T-cell (primary cell): ENCODE measurements at regions of chr5 and their contacts with region 1.

Region 1: GRCh38 chr5:140734354-140734753 is 34.1 kb downstream of the ZMAT2 start:
- DNase-seq: no peak
- ATAC-seq: no peak
- H3K4me3 ChIP-seq: no peak overlapping the region
- H3K4me3 Mint-ChIP-seq: no peak overlapping the region
- H3K27ac ChIP-seq: no peak overlapping the region
- H3K27ac Mint-ChIP-seq: no peak overlapping the region
- H3K4me1 ChIP-seq: no peaks in the 10 kb centered on the region
- H3K4me1 Mint-ChIP-seq: no peaks in the 10 kb centered on the region
- H3K27me3 ChIP-seq: peaks cover 0 to 6% of the 10 kb centered on the region in 2 experiments
- H3K27me3 Mint-ChIP-seq: peaks cover 34 to 40% of the 10 kb centered on the region in 2 donors

Region 2: GRCh38 chr5:140391312-140391711 is 343.0 kb before region 1 on chr5:
- CTCF ChIA-PET with region 1: no interaction called
- POLR2A ChIA-PET with region 1: interaction called in 1 of 2 experiments, 12 read pairs
- DNase-seq: no peak
- ATAC-seq: no peak
- H3K4me3 ChIP-seq: no peak overlapping the region
- H3K4me3 Mint-ChIP-seq: no peak overlapping the region
- H3K27ac ChIP-seq: no peak overlapping the region
- H3K27ac Mint-ChIP-seq: no peak overlapping the region
- H3K4me1 ChIP-seq: no peaks in the 10 kb centered on the region
- H3K4me1 Mint-ChIP-seq: no peaks in the 10 kb centered on the region
- H3K27me3 ChIP-seq: no peaks in the 10 kb centered on the region
- H3K27me3 Mint-ChIP-seq: no peaks in the 10 kb centered on the region

Region 3: GRCh38 chr5:140524003-140524402 is 210.4 kb before region 1 on chr5:
- CTCF ChIA-PET with region 1: no interaction called
- POLR2A ChIA-PET with region 1: interaction called in 1 of 2 experiments, 29 read pairs
- DNase-seq: no peak
- ATAC-seq: no peak
- H3K4me3 ChIP-seq: no peak overlapping the region
- H3K4me3 Mint-ChIP-seq: no peak overlapping the region
- H3K27ac ChIP-seq: no peak overlapping the region
- H3K27ac Mint-ChIP-seq: peak overlapping the region in 1 of 2 donors; percentile 47
- H3K4me1 ChIP-seq: no peaks in the 10 kb centered on the region
- H3K4me1 Mint-ChIP-seq: no peaks in the 10 kb centered on the region
- H3K27me3 ChIP-seq: no peaks in the 10 kb centered on the region
- H3K27me3 Mint-ChIP-seq: no peaks in the 10 kb centered on the region

Region 4: GRCh38 chr5:140710899-140711552 is 23.3 kb before region 1 on chr5:
- CTCF ChIA-PET with region 1: no interaction called
- POLR2A ChIA-PET with region 1: interaction called in 1 of 2 experiments, 14 read pairs
- DNase-seq: peak; percentile 63 to 93 (median 80)
- ATAC-seq: peak; percentile 85 to 89 (median 86)
- H3K4me3 ChIP-seq: peak overlapping the region; percentile 90 to 97
- H3K4me3 Mint-ChIP-seq: peak overlapping the region; percentile 98 to 99 (median 98)
- H3K27ac ChIP-seq: peak overlapping the region; percentile 90
- H3K27ac Mint-ChIP-seq: peak overlapping the region; percentile 99 to 100
- H3K4me1 ChIP-seq: peaks cover 2 to 10% of the 10 kb centered on the region in 2 experiments
- H3K4me1 Mint-ChIP-seq: peaks cover 18 to 37% (median 25%) of the 10 kb centered on the region in 3 donors
- H3K27me3 ChIP-seq: no peaks in the 10 kb centered on the region
- H3K27me3 Mint-ChIP-seq: peaks cover 0 to 6% of the 10 kb centered on the region in 2 donors

Region 5: DNA sequence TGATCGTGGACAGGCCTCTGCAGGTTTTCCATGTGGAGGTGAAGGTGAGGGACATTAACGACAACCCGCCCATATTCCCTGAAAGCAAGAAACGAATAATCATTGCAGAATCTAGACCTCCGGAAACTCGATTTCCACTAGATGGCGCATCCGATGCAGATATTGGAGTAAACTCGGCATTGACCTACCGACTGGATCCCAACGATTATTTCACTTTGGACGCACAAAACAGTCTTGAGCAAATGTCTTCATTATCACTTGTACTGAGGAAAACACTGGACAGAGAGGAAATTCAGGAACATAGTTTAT is 148.2 kb after region 1 on chr5:
- CTCF ChIA-PET with region 1: no interaction called
- POLR2A ChIA-PET with region 1: no interaction called
- DNase-seq: no peak
- ATAC-seq: no peak
- H3K4me3 ChIP-seq: no peak overlapping the region
- H3K4me3 Mint-ChIP-seq: no peak overlapping the region
- H3K27ac ChIP-seq: no peak overlapping the region
- H3K27ac Mint-ChIP-seq: no peak overlapping the region
- H3K4me1 ChIP-seq: no peaks in the 10 kb centered on the region
- H3K4me1 Mint-ChIP-seq: no peaks in the 10 kb centered on the region
- H3K27me3 ChIP-seq: peaks cover 4 to 19% of the 10 kb centered on the region in 2 experiments
- H3K27me3 Mint-ChIP-seq: peaks cover 34 to 35% of the 10 kb centered on the region in 2 donors